Activated CD8-positive, alpha-beta T cell treated with anti-CD3 and anti-CD28 coated beads, Interleukin-2, amount 10 ng/mL, durations not matched to agents 7 days and 5 days (primary cell): ENCODE measurements at regions of chr10 and their contacts with region 1.

Region 1: DNA sequence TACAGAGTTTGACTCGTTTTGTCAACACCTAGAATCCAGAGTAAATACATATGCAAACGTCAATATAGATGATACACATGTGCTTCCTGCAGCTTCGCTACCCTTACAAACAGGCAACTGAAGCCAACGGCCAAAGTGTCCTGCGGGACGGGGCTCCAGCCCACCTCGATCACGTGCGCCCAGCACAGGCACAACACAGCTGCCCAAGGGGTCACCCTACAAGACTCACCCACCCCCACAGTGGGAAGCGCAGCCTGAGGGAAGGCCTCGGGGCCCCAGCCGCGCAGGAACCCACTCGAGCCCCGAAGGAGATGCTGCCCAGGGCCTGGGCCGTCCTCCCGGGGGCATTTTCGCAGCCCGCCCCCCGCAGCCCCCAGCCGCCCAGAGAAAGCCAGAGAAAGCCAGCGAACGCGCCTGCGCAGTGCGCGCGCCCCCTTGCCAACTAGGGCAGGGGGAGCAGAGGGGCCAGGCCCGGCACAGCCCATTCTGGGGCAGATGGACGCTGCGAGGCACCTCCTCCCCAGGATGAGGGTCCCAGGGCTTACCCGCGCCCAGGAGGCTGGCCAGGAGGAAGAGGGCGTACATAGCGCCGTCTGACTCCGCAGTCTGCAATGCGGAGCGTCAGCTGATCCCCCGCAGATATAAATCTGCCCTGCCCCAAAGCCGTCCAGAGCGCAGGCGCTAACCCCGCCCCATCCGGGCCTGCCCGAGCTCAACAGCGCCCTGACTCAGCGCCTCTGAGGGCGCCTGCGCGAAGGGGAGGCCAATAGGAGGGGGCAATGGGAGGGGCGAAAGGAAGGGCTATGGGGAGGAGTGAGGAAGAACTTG is at the start of gene PSAP:
- DNase-seq: peak; percentile 99
- ATAC-seq: peak; percentile 98
- H3K4me3 Mint-ChIP-seq: peak within 1 kb of the TSS; percentile 91
- H3K27ac Mint-ChIP-seq: peak within 1 kb of the TSS; percentile 73
- H3K4me1 Mint-ChIP-seq: peaks cover 45% of the 10 kb centered on the region
- H3K27me3 Mint-ChIP-seq: peaks cover 2% of the 10 kb centered on the region
- total RNA-seq, gene PSAP: 112 to 113 TPM

Region 2: DNA sequence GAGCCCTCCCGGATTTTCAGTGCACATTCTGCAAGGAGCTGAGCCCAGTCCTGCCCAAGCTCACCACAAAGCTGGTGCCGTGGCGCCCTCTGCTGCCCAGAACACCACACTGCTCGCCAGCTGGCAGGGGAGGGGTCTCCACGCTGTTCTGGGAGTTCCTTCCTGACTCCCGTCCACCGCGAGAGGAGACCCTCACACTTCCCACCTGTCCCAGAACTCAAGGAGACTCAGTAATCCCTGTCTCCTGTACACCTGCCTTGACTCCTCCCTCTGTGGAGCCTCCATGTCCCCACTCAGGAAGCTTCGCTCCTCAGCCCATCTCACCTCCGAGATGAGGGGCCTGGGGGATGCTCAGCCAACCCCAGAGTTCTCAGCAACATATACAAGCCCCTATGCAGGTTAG is 142.5 kb before region 1 on chr10:
- CTCF ChIA-PET with region 1: no interaction called
- POLR2A ChIA-PET with region 1: no interaction called
- DNase-seq: peak; percentile 68
- ATAC-seq: peak; percentile 42
- H3K4me3 Mint-ChIP-seq: no peak overlapping the region
- H3K27ac Mint-ChIP-seq: peak overlapping the region; percentile 55
- H3K4me1 Mint-ChIP-seq: peaks cover 55% of the 10 kb centered on the region
- H3K27me3 Mint-ChIP-seq: no peaks in the 10 kb centered on the region

Region 3: DNA sequence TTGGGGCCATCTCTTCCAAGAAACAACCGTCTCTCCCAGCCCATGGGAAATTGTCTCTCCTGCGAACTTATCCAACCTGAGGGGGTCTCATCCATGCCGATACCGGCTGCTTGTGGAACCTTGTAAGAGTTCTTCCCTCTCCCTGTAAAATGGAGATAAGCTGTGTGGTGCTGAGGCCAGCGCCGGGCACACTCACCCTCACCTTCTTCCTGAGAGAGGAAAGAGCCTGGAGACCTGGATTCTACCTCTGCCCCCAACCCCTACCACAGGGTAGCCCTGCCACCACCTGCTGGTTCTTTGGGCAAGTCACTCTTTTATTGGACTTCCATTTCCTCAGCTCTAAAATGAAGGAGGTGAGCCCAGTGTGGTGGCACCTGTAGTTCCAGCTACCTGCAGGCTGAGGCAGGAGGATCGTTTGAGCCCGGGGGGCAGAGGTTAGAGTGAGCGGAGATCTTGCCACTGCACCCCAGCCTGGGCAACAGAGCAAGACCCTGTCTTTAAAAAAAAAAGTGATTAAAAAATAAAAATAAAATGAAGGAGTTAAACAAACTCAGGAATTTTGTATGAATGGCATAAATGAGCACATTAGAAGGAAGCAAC is 38.6 kb after region 1 on chr10:
- CTCF ChIA-PET with region 1: interaction called, 19 read pairs
- POLR2A ChIA-PET with region 1: no interaction called
- DNase-seq: no peak
- ATAC-seq: no peak
- H3K4me3 Mint-ChIP-seq: peak overlapping the region; percentile 82
- H3K27ac Mint-ChIP-seq: peak overlapping the region; percentile 83
- H3K4me1 Mint-ChIP-seq: peaks cover 15% of the 10 kb centered on the region
- H3K27me3 Mint-ChIP-seq: peaks cover 24% of the 10 kb centered on the region